ENCODE measurements at regions of chr4 and their contacts with region 1.

Region 1: GRCh38 chr4:70269674-70270073 is 27.3 kb downstream of the CSN3 start:
- DNase-seq: no peak
- H3K4me3 ChIP-seq: no peak overlapping the region
- CTCF ChIP-seq: no peak
- POLR2A ChIP-seq: no peak

Region 2: DNA sequence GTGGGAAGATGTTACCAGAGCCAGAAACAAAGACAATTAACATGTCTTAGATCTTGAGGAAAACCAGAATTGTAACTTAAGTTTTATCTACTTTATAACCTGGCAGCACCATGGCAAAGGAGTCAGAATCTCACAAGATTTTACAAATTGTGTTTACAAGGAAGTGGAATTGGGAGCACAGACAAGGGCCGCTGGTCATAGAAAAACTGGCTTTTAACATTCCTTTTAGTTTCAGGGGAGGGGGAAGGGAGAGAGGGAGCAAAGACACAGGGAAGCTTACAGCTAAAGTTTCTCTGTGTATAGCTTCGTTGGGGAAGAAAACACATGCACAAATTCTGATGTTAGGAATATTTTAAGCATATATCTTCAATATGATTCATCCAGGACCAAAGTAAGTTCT is 1044.8 kb before region 1 on chr4:
- intact Hi-C with region 1: no loop called
- DNase-seq: no peak
- H3K4me3 ChIP-seq: no peak overlapping the region
- CTCF ChIP-seq: no peak
- POLR2A ChIP-seq: no peak

Region 3: DNA sequence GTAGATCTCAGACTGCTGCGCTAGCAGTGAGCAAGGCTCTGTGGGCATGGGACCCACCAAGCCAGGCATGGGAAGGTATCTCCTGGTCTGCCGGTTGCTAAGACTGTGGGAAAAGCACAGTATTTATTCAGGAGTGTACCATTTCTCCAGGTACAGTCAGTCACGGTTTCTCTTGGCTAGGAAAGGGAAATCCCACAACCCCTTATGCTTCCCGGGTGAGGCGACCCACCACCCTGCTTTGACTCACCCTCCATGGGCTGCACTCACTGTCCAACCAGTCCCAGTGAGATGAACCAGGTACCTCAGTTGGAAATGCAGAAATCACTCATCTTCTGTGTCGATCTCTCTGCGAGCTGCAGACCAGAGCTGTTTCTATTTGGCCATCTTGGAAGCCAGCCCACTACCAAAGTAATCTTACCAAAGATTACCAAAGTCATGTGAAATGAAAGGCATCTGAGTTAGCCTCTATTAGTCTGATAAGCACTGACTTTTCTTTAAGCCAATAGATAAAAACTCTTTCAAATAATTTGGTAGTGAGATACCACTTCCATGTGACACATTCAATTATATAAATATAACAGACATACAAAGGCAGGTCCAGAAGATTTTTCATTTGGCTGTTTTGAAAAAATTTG is 227.9 kb before region 1 on chr4:
- intact Hi-C with region 1: loop called (anchors 5 kb)
- DNase-seq: no peak
- H3K4me3 ChIP-seq: no peak overlapping the region
- CTCF ChIP-seq: no peak
- POLR2A ChIP-seq: no peak

Region 4: DNA sequence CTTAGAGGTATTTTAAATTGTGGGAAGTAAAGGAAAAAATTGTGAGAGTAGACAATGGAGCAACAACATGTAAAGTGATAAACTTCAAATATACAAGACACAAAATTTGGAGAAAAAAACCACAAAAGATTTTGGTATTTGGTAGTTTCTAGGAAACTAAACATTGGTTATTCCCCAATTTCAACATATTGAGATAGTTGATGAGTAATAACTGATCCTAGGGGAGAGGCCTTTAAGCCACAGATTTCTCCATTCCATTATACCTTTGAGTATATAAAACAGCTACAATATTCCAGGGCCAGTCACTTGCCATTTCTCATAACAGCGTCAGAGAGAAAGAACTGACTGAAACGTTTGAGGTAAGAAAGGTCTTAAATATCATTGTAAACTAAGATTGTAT is 43.9 kb before region 1 on chr4 and contains the start of gene FDCSP:
- intact Hi-C with region 1: no loop called
- DNase-seq: no peak
- H3K4me3 ChIP-seq: no peak within 1 kb of the TSS
- CTCF ChIP-seq: no peak
- POLR2A ChIP-seq: no peak
- total RNA-seq, gene FDCSP: not detected

Measured in lower leg skin (tissue), 4 donors.